Panc1 (cell line): ENCODE measurements at regions of chr1 and their contacts with region 1.

Region 1: GRCh38 chr1:26516987-26517765 is 12.4 kb upstream of the RPS6KA1 start:
- DNase-seq: no peak
- ATAC-seq: no peak; the same call in 1 of the 2 replicates
- H3K4me3 ChIP-seq: no peak overlapping the region
- H3K27ac ChIP-seq: no peak overlapping the region
- H3K4me1 ChIP-seq: no peaks in the 10 kb centered on the region
- H3K27me3 ChIP-seq: no peaks in the 10 kb centered on the region
- CTCF ChIP-seq: no peak

Region 2: DNA sequence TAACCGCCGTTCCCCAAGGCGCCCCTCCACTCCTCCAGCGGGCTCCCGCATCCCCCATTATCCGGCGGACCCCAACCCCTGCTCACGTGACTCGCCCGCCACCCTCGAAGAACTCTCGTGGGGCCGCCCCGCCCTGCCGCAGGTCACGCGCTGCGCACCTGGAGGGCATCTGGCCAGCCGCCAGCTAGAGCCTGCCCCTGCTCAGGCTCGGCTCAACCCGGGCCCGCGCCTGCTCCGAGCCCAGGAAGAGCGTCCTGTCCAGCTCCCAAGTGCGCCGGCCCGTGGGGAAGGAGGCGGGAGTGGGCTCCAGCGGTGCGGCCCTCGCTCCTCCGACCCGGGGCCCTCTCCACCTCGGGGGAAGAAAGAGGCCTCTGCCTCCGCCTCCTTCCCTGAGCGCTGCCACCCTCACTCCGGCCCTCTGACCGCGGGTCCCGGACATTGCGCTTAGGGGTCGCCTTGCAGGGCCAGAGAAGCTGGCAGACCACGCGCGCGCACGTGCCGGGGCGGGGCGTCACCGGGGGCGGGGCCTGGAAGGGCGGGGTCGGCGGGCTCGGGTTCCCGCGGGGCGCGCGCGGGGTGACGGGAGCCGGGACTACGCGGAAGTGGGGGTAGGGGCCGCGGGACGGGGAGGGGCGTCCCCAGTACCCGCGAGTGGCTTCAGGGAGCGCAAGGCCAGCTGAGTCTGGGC is 16.5 kb before region 1 on chr1:
- CTCF ChIA-PET with region 1: no interaction called
- POLR2A ChIA-PET with region 1: interaction called, 15 read pairs
- in situ Hi-C with region 1: no loop called
- intact Hi-C with region 1: no loop called
- DNase-seq: peak; percentile 39
- ATAC-seq: peak; percentile 90
- H3K4me3 ChIP-seq: peak overlapping the region; percentile 61 to 78
- H3K27ac ChIP-seq: peak overlapping the region; percentile 97
- H3K4me1 ChIP-seq: peaks cover 9% of the 10 kb centered on the region
- H3K27me3 ChIP-seq: no peaks in the 10 kb centered on the region
- CTCF ChIP-seq: no peak; the same call in 1 of the 2 replicates

Region 3: GRCh38 chr1:26799479-26800142 is 282.4 kb after region 1 on chr1:
- CTCF ChIA-PET with region 1: no interaction called
- POLR2A ChIA-PET with region 1: interaction called, 17 read pairs
- in situ Hi-C with region 1: no loop called
- intact Hi-C with region 1: no loop called
- DNase-seq: no peak
- ATAC-seq: peak; percentile 78
- H3K4me3 ChIP-seq: no peak overlapping the region
- H3K27ac ChIP-seq: peak overlapping the region; percentile 59
- H3K4me1 ChIP-seq: peaks cover 18% of the 10 kb centered on the region
- H3K27me3 ChIP-seq: no peaks in the 10 kb centered on the region
- CTCF ChIP-seq: no peak